Endothelial cell of umbilical vein (primary cell): ENCODE measurements at regions of chr16 and their contacts with region 1.

Region 1: GRCh38 chr16:24010440-24011089 is 174.8 kb downstream of the PRKCB start:
- DNase-seq: peak; percentile 57
- H3K4me3 ChIP-seq: no peak overlapping the region
- H3K27ac ChIP-seq: no peak overlapping the region
- H3K4me1 ChIP-seq: no peaks in the 10 kb centered on the region
- H3K27me3 ChIP-seq: no peaks in the 10 kb centered on the region
- CTCF ChIP-seq: peak; percentile 68 to 74
- POLR2A ChIP-seq: no peak

Region 2: GRCh38 chr16:23678430-23679273 is 331.9 kb before region 1 on chr16 and contains the start of gene PLK1:
- CTCF ChIA-PET with region 1: interaction called, 12 read pairs
- POLR2A ChIA-PET with region 1: no interaction called
- dilution Hi-C with region 1: no loop called
- intact Hi-C with region 1: no loop called
- DNase-seq: peak; percentile 84
- H3K4me3 ChIP-seq: peak within 1 kb of the TSS; percentile 55 to 77 (median 68)
- H3K27ac ChIP-seq: peak within 1 kb of the TSS; percentile 4
- H3K4me1 ChIP-seq: peaks cover 27% of the 10 kb centered on the region
- H3K27me3 ChIP-seq: no peaks in the 10 kb centered on the region
- CTCF ChIP-seq: peak in 1 of 2 donors; percentile 33
- POLR2A ChIP-seq: no peak
- total RNA-seq, gene PLK1: 100 and 109 TPM in 2 replicates

Region 3: DNA sequence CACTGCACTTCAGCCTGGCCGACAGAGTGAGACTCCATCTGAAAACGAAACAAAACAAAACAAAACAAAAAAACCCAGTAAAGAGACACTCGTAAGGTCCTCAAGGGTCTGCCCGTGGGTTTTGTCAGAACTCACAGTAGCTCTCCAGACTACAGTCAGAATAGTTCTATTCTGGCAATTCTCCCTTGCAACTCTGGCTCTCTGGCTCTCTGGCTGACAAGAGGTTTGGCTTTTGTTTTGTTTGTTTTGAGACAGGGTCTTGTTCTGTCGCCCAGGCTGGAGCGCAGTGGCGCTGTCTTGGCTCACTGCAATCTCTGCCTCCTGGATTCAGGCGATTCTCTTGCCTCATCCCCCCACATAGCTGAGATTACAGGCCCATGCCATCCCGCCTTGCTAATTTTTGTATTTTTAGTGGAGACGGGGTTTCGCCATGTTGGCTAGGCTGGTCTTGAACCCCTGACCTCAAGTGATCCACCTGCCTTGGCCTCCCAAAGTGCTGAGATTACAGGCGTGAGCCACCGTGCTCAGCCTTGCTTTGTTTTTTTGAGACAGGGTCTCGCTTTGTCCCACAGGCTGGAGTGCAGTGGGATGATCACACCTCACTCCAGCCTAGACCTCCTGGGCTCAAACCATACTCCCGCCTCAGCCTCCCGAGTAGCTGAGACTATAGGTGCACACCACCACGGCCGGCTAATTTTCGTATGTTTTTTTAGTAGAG is 276.2 kb before region 1 on chr16:
- CTCF ChIA-PET with region 1: interaction called, 50 read pairs
- POLR2A ChIA-PET with region 1: no interaction called
- dilution Hi-C with region 1: no loop called
- intact Hi-C with region 1: loop called (anchors 1 kb)
- DNase-seq: no peak
- H3K4me3 ChIP-seq: no peak overlapping the region
- H3K27ac ChIP-seq: no peak overlapping the region
- H3K4me1 ChIP-seq: no peaks in the 10 kb centered on the region
- H3K27me3 ChIP-seq: no peaks in the 10 kb centered on the region
- CTCF ChIP-seq: no peak
- POLR2A ChIP-seq: no peak

Region 4: DNA sequence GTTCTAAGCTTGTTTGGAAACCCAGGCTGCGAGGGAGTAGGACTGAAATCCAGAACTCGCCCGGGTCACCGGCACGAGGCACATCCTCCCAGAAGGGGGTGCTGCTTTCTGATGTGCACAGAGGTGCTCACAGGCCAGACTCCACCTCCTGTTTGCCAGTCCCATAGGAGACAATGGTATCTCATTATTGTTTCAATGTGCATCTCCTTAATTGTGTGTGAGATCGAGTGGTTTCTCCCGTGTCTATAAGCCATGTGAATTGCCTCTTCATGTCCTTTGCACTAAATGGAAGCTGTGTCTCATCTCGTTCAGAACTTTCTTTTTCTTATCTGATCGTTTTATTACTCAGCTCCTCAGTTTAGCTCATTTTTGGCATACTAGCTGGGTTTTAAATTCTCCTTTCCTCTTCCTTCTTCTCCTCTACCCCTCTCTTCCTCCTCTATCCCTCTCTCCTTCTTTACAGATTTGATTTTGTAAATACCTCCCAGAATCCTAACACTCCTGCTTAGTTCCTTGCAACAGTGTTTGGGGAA is 206.9 kb before region 1 on chr16:
- CTCF ChIA-PET with region 1: interaction called, 133 read pairs
- POLR2A ChIA-PET with region 1: no interaction called
- dilution Hi-C with region 1: no loop called
- intact Hi-C with region 1: loop called (anchors 1 kb)
- DNase-seq: peak; percentile 15
- H3K4me3 ChIP-seq: no peak overlapping the region
- H3K27ac ChIP-seq: no peak overlapping the region
- H3K4me1 ChIP-seq: no peaks in the 10 kb centered on the region
- H3K27me3 ChIP-seq: no peaks in the 10 kb centered on the region
- CTCF ChIP-seq: peak; percentile 16 to 37
- POLR2A ChIP-seq: no peak

Region 5: DNA sequence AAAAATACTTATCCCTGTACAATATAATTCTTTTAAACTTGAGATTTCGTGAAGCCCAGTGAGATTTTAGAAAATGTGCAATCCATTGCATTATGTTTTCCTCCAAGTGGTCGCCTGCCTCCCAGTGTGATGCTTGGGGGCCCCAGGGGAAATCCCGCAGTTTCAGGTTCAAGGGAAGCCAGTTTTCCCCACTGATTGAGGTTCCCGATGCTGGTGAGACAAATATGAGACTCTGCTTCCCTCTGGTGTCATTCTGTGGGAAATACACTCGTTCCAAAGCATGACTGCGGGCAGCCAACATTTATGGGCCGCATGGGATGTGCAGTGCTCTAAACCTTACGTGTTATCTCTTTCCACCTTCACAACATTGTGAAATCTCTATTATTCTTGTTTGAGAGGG is 26.0 kb after region 1 on chr16:
- CTCF ChIA-PET with region 1: interaction called, 10 read pairs
- POLR2A ChIA-PET with region 1: no interaction called
- dilution Hi-C with region 1: no loop called
- intact Hi-C with region 1: no loop called
- DNase-seq: peak; percentile 43
- H3K4me3 ChIP-seq: no peak overlapping the region
- H3K27ac ChIP-seq: no peak overlapping the region
- H3K4me1 ChIP-seq: no peaks in the 10 kb centered on the region
- H3K27me3 ChIP-seq: no peaks in the 10 kb centered on the region
- CTCF ChIP-seq: peak; percentile 47 to 55
- POLR2A ChIP-seq: no peak

Region 6: DNA sequence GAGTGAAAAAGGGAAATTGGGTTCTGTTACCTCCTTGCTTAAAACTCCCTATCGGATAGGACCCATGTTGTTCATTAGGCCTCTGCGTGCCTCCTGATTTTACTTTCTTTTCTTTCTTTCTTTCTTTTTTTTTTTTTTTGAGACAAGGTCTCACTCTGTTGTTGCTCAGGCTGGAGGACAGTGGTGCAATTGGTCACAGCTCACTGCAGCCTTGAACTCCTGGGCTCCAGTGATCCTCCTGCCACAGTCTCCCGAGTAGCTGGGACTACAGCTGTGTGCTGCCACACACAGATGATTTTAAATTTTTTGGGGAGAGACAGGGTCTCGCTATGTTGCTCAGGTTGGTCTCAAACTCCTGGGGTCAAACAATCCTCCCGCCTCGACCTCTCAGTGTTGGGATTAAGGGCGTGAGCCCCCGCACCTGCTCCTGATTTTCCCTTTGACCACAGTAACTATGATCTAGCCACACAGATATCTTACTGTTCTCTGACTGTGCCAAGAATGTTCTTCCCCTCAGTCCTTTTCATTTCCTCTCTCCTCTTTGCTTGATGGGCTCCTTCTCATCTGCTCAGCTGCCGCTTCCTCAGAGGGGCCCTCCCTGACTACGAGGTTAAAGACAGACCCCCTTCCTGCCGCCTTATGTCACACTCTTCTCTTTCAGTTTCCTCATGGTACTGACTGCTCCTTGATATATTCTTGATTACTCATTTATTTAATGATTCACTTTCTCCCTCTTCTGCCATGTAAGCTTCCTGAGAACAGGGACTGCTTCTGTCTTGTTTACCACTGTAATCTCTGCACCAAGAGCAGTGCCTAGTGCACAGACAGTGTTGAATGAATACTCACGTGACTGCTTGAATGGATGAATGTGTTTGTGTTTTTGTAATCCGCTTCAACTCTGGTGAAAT is 1145.2 kb after region 1 on chr16:
- CTCF ChIA-PET with region 1: no interaction called
- POLR2A ChIA-PET with region 1: no interaction called
- dilution Hi-C with region 1: no loop called
- intact Hi-C with region 1: no loop called
- DNase-seq: peak; percentile 29
- H3K4me3 ChIP-seq: no peak overlapping the region
- H3K27ac ChIP-seq: no peak overlapping the region
- H3K4me1 ChIP-seq: no peaks in the 10 kb centered on the region
- H3K27me3 ChIP-seq: no peaks in the 10 kb centered on the region
- CTCF ChIP-seq: no peak
- POLR2A ChIP-seq: no peak